BJ (cell line): ENCODE measurements at regions of chr2 and their contacts with region 1.

Region 1: DNA sequence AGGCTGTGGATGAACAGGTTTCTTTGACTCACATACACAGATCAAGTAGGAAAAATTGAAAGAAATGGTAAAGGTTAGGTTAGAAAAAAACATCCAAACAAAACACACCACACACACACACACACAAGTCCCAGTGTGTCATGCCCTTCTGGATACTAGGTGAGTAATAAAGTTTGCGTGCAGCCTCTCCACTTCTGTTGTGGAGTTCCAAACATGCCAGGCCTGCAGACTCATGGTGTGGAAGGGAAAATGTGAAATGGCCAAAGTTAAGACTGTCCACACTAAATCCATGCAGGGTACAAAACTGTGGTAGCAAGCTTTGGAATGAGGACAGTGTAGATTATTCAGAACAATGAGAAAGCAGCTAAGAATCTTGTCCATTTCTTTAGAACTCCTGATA is 114.6 kb downstream of the IKZF2 start:
- DNase-seq: peak; percentile 16
- H3K4me3 ChIP-seq: no peak overlapping the region
- H3K27me3 ChIP-seq: no peaks in the 10 kb centered on the region
- CTCF ChIP-seq: no peak

Region 2: GRCh38 chr2:212686285-212686895 is 350.4 kb before region 1 on chr2:
- CTCF ChIA-PET with region 1: no interaction called
- POLR2A ChIA-PET with region 1: interaction called, 24 read pairs
- DNase-seq: no peak
- H3K4me3 ChIP-seq: no peak overlapping the region
- H3K27me3 ChIP-seq: no peaks in the 10 kb centered on the region
- CTCF ChIP-seq: peak; percentile 79

Region 3: DNA sequence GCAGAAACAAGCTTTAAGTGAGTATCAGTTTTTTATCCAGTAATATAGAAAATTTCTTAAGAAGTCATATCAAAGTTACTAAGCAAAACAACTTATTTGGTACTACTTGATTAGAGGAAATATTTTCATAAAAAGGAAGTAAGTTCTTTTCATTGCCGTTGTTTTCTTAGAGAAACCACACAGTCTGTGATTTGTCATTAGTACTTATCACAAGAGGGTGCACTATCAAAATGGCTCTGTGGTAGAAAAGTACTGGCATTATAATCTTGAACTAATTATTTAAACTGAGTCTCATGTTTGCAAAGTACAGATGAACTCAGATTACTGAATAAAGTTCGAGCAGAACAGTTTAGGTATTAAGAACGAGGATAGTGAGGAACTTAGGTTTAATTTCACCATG is 21.1 kb after region 1 on chr2:
- CTCF ChIA-PET with region 1: no interaction called
- POLR2A ChIA-PET with region 1: no interaction called
- DNase-seq: no peak
- H3K4me3 ChIP-seq: no peak overlapping the region
- H3K27me3 ChIP-seq: no peaks in the 10 kb centered on the region
- CTCF ChIP-seq: no peak

Region 4: GRCh38 chr2:213068676-213069356 is 32.0 kb after region 1 on chr2:
- CTCF ChIA-PET with region 1: interaction called, 3 read pairs
- POLR2A ChIA-PET with region 1: interaction called, 14 read pairs
- DNase-seq: no peak
- H3K4me3 ChIP-seq: no peak overlapping the region
- H3K27me3 ChIP-seq: no peaks in the 10 kb centered on the region
- CTCF ChIP-seq: no peak

Region 5: GRCh38 chr2:213137064-213137463 is 100.2 kb after region 1 on chr2:
- CTCF ChIA-PET with region 1: no interaction called
- POLR2A ChIA-PET with region 1: no interaction called
- DNase-seq: no peak
- H3K4me3 ChIP-seq: no peak overlapping the region
- H3K27me3 ChIP-seq: no peaks in the 10 kb centered on the region
- CTCF ChIP-seq: no peak